ENCODE measurements at regions of chr15 and their contacts with region 1.

Region 1: GRCh38 chr15:60916679-60917460 is 312.2 kb downstream of the RORA start:
- DNase-seq: peak; percentile 67
- ATAC-seq: peak; percentile 93
- H3K4me3 ChIP-seq: peak overlapping the region in 1 of 3 experiments; percentile 27; a peak in 1 of 6 replicates
- H3K27ac ChIP-seq: no peak overlapping the region
- H3K4me1 ChIP-seq: peaks cover 28% of the 10 kb centered on the region
- H3K27me3 ChIP-seq: peaks cover 0 to 20% of the 10 kb centered on the region in 2 experiments; a peak in 1 of 5 replicates
- CTCF ChIP-seq: peak; percentile 85
- EP300 ChIP-seq: no peak
- POLR2A ChIP-seq: no peak
- RAD21 ChIP-seq: peak; percentile 72

Region 2: DNA sequence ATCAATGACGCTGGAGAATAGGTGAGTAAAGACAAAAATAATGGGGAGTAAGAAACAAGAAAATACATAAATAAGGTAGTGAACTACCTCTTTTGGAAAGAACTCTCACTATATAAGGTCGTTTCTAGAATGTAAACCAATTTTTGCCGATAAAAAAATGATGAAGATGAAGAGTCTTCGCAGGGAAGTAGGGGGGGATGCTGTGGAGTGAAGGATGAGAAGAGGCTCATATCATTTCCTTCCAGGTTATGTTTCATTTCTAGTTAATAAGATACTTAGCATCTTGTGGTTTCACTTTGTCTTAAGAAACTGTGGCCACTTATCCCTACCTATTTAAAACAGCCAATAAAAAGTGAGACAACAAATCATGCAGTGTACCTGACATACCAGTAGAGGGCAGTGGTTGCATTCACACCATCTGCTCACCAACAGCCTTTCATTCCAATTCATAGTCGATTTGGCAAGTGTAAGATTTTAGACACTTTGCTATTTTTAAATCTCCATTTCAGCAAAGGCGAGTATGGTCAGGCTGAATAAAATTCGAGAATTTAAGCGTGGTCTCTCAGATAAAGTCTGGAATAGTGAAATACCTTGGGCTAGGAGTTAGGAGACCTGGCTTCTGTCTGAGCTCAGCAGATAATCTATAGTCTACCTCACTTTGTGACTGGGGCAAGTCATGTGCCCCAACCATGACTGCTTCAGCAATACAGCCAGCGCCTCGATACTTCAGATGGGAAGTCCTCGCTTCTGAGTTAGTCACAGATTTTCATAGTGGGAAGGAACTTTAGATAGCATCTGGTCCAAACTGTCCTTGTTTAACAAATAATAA is 409.1 kb before region 1 on chr15:
- CTCF ChIA-PET with region 1: interaction called, 3 read pairs
- POLR2A ChIA-PET with region 1: no interaction called
- in situ Hi-C with region 1: no loop called
- intact Hi-C with region 1: loop called (anchors 2 kb)
- DNase-seq: peak; percentile 43
- ATAC-seq: peak; percentile 75
- H3K4me3 ChIP-seq: no peak overlapping the region
- H3K27ac ChIP-seq: no peak overlapping the region
- H3K4me1 ChIP-seq: no peaks in the 10 kb centered on the region
- H3K27me3 ChIP-seq: no peaks in the 10 kb centered on the region
- CTCF ChIP-seq: peak; percentile 84
- EP300 ChIP-seq: no peak
- POLR2A ChIP-seq: no peak
- RAD21 ChIP-seq: peak; percentile 63

Region 3: DNA sequence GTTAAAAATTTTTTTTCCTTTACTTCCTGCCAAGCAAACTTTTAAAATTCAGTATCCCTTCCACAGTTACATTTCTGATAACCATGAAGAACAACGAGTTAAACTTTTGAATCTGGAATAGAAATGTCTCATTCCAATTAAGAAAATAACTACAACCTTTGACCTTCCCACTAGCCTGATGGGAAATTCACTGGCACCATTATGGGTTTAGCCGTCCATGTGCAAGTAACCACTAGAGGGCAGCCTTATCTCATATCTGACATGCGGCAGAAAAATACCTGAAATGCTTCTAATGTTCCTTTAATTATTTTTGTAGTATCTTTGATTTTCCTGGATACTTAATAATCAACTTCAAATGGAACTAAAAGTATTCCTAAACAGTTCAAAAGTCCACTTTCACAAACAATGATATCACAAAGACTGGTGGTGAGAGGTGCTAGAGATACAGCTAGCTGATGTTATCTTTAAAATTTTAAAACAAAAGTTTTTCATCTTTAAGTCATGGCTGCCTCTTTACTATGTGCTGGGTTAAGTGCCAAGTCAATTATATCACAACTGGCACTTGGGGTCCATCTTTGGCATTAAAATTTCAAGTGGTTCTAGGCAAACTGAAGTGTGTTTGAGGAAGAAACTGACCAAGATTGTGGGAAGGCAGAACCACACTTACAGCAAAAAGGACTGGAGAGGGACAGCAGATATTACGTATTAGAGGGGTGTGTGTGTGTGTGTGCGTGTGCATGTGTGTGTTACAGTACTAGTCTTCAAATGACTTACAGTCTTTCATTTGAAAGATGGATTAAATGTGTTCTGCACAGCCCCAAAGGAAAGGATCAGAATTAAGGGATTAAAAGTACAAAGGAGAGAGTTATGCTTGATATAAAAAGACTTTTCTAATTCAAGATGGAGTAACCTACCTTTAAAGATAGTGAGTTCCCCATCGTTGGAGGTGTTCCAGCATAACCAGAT is 330.8 kb before region 1 on chr15:
- CTCF ChIA-PET with region 1: interaction called, 42 read pairs
- POLR2A ChIA-PET with region 1: interaction called, 7 read pairs
- in situ Hi-C with region 1: loop called (anchors 5 kb)
- intact Hi-C with region 1: loop called (anchors 1 kb)
- DNase-seq: peak; percentile 68
- ATAC-seq: peak; percentile 51; the same call in 2 of the 3 replicates
- H3K4me3 ChIP-seq: no peak overlapping the region
- H3K27ac ChIP-seq: no peak overlapping the region
- H3K4me1 ChIP-seq: peaks cover 88% of the 10 kb centered on the region
- H3K27me3 ChIP-seq: no peaks in the 10 kb centered on the region
- CTCF ChIP-seq: peak; percentile 82
- EP300 ChIP-seq: no peak
- POLR2A ChIP-seq: no peak
- RAD21 ChIP-seq: peak; percentile 70

Region 4: GRCh38 chr15:60591496-60592370 is 325.1 kb before region 1 on chr15:
- CTCF ChIA-PET with region 1: interaction called, 42 read pairs
- POLR2A ChIA-PET with region 1: interaction called, 7 read pairs
- in situ Hi-C with region 1: loop called (anchors 5 kb)
- intact Hi-C with region 1: loop called (anchors 1 kb)
- DNase-seq: no peak
- ATAC-seq: peak; percentile 69
- H3K4me3 ChIP-seq: peak overlapping the region; percentile 86 to 98 (median 90)
- H3K27ac ChIP-seq: peak overlapping the region; percentile 90
- H3K4me1 ChIP-seq: peaks cover 55% of the 10 kb centered on the region
- H3K27me3 ChIP-seq: peaks cover 0 to 8% of the 10 kb centered on the region in 2 experiments; a peak in 1 of 5 replicates
- CTCF ChIP-seq: no peak
- EP300 ChIP-seq: no peak
- POLR2A ChIP-seq: no peak; a peak in 2 of 4 replicates
- RAD21 ChIP-seq: no peak; the same call in 1 of the 2 replicates

Region 5: DNA sequence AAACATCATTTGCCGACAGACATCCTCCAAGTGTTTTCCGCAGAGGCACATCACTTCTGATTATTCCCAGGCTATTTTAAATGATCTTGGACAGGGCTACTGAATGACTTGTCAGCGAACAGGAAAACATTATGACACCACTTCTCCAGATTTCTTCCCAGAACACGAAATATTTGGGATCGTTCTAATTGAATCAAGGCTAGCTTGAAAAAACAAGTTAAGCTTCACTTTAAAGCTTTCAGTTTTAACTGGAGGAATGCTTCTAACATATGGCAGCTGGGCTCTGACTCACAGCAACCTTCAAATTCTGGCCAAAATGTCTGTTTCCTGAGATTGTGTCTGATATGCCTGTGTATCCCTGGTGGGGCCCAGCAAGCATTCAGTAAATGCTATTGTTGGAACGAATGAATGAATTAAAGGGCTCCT is 311.0 kb before region 1 on chr15:
- CTCF ChIA-PET with region 1: no interaction called
- POLR2A ChIA-PET with region 1: no interaction called
- in situ Hi-C with region 1: no loop called
- intact Hi-C with region 1: no loop called
- DNase-seq: no peak
- ATAC-seq: no peak
- H3K4me3 ChIP-seq: no peak overlapping the region
- H3K27ac ChIP-seq: no peak overlapping the region
- H3K4me1 ChIP-seq: no peaks in the 10 kb centered on the region
- H3K27me3 ChIP-seq: peaks cover 3 to 24% of the 10 kb centered on the region in 2 experiments; a peak in 3 of 5 replicates
- CTCF ChIP-seq: no peak
- EP300 ChIP-seq: no peak
- POLR2A ChIP-seq: no peak
- RAD21 ChIP-seq: no peak

Region 6: GRCh38 chr15:60673918-60674558 is 242.8 kb before region 1 on chr15:
- CTCF ChIA-PET with region 1: interaction called, 6 read pairs
- POLR2A ChIA-PET with region 1: no interaction called
- in situ Hi-C with region 1: no loop called
- intact Hi-C with region 1: loop called (anchors 5 kb)
- DNase-seq: peak; percentile 13
- ATAC-seq: no peak
- H3K4me3 ChIP-seq: no peak overlapping the region
- H3K27ac ChIP-seq: no peak overlapping the region
- H3K4me1 ChIP-seq: 0 out of 2 replicates have a peak, but pooled peaks cover 5% of the 10 kb centered on the region
- H3K27me3 ChIP-seq: peaks cover 0 to 23% of the 10 kb centered on the region in 2 experiments; a peak in 4 of 5 replicates
- CTCF ChIP-seq: no peak
- EP300 ChIP-seq: no peak
- POLR2A ChIP-seq: no peak
- RAD21 ChIP-seq: no peak

Region 7: DNA sequence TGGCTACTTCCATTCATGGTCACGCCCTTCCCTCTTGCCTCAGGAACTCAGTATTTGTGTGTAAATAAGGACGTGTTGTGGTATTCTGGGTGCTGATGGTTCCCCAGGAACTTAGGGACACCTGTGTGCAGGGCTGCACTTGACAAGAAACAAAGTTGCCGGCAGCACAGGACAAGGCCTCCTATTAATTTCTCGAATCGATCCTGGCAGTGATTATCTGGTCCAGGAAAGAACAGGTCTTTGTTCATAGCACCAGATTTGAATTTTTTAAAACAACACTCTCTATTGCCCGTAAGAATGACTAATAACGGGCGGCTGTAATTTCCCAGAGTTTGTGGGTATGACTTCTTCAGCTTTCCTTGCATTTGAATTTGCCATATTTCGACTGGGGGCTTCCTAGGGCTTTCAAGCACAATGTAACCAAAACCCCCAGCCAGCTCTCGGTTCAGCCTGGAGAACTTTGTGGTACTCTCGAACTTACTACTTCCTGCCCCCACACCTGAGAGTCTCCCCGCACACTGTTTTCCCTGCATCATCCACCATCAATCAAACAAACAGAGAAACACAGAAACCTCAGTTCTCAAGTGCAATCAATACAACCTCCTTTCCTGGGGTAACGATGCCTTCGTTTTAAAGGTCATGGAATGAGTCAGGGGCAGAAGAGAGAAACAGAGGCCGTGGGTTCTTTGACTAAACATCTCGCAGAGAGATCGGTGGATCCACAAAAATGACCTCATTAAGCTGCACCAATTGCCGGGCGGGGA is 196.2 kb before region 1 on chr15:
- CTCF ChIA-PET with region 1: no interaction called
- POLR2A ChIA-PET with region 1: no interaction called
- in situ Hi-C with region 1: no loop called
- intact Hi-C with region 1: no loop called
- DNase-seq: no peak
- ATAC-seq: no peak
- H3K4me3 ChIP-seq: no peak overlapping the region
- H3K27ac ChIP-seq: peak overlapping the region; percentile 10
- H3K4me1 ChIP-seq: peaks cover 66% of the 10 kb centered on the region
- H3K27me3 ChIP-seq: peaks cover 0 to 2% of the 10 kb centered on the region in 2 experiments; a peak in 1 of 5 replicates
- CTCF ChIP-seq: no peak
- EP300 ChIP-seq: no peak
- POLR2A ChIP-seq: no peak
- RAD21 ChIP-seq: no peak

Region 8: GRCh38 chr15:60859996-60860494 is 56.8 kb before region 1 on chr15:
- CTCF ChIA-PET with region 1: no interaction called
- POLR2A ChIA-PET with region 1: no interaction called
- in situ Hi-C with region 1: no loop called
- intact Hi-C with region 1: no loop called
- DNase-seq: no peak
- ATAC-seq: no peak
- H3K4me3 ChIP-seq: no peak overlapping the region
- H3K27ac ChIP-seq: no peak overlapping the region
- H3K4me1 ChIP-seq: no peaks in the 10 kb centered on the region
- H3K27me3 ChIP-seq: peaks cover 0 to 10% of the 10 kb centered on the region in 2 experiments; a peak in 1 of 5 replicates
- CTCF ChIP-seq: no peak
- EP300 ChIP-seq: no peak
- POLR2A ChIP-seq: no peak
- RAD21 ChIP-seq: no peak